Activated CD4-positive, alpha-beta memory T cell treated with anti-CD3 and anti-CD28 coated beads, Interleukin-2, amount 10 ng/mL, durations not matched to agents 7 days and 5 days (primary cell): ENCODE measurements at regions of chr2 and their contacts with region 1.

Region 1: DNA sequence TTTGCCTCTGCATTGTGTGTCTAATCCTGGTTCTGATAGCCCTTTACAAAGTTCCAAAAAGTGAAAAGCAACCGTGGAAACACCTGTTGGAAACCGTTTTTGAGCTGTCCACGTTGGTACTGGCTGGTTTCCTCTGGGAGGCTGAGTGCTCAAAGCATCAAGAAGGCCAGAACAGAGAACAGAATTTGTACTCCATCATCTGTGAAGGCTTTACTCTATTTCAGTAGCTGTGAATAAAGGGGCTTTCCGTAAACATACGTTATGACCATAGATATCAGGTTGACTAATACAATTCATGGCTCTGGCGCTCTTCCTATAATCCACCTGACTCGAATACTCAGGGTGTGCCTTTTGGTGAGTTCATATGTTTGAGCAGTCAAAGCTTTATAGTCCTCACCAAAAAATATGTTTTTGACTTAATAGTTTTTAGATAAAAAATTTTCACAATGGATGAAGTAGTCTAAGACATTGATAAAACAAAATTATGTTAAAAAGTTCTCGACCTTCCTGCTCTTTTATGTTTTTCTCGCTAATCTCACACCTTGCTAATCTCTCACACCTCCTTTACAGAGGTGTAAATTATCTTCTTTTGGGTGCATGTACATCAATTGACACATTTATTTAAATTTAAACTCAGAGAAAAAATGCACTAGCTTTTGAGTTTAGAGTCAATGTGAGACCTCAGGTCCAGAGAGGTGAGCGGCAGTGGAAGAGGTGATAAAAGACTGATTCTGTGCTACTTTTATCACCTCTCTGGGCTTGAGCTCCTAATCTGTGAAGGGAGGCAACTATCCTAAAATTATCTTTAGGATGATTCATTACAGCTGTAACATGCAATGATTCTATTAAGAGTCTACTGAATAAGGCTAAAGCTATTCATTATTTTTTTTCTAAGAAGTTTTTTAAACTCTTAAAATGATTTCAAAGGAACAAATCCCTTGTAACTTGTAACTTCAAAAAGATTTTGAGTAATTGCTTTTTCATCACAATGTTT is 65.3 kb downstream of the CXCR4 start:
- DNase-seq: peak; percentile 31
- H3K4me3 Mint-ChIP-seq: peak overlapping the region; percentile 53
- H3K27ac Mint-ChIP-seq: peak overlapping the region; percentile 87
- H3K4me1 Mint-ChIP-seq: peaks cover 92% of the 10 kb centered on the region
- H3K27me3 Mint-ChIP-seq: no peaks in the 10 kb centered on the region

Region 2: DNA sequence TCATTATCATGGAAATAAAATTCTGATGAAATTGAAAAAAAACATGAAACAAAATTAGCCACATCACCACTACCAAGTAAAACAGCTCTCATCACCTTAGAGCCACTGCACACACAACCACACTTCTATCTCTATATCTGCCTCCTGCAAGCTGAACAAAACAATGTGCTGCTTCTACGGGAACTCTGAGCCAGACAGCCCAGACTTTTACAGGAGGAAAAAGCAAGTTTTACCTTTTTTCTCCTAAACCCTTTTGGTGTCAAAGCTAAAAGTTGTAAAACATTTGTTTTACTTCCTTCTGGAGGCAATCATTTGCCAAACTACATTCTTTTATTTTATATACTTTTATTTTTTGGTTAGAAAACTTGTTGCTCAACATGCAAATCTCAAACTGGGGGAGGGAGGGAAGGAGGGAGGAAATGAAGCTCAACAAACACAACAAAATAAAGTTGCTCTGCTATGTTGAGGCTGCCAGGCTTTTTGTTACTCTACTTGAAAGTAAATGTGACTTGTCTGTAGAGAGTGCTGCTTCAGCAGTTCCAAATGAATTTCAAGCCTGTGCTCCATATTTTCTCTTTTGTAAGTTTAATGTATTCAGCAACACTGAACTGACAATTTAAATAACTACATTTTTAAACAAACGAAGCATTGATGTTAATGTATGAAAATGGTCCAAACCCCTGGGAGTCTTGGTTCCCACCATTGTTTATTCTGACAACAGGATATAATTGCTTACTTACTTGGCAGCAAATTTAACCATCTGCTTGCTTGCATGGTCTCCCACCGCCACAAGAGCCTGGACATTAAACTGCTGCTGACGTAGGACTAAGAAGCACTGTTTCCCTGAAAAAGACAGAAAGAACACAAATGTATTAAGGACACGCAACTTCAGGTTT is 91.8 kb before region 1 on chr2:
- CTCF ChIA-PET with region 1: no interaction called
- POLR2A ChIA-PET with region 1: interaction called, 31 read pairs
- DNase-seq: peak; percentile 33
- H3K4me3 Mint-ChIP-seq: peak overlapping the region; percentile 53
- H3K27ac Mint-ChIP-seq: peak overlapping the region; percentile 92
- H3K4me1 Mint-ChIP-seq: peaks cover 58% of the 10 kb centered on the region
- H3K27me3 Mint-ChIP-seq: no peaks in the 10 kb centered on the region

Region 3: DNA sequence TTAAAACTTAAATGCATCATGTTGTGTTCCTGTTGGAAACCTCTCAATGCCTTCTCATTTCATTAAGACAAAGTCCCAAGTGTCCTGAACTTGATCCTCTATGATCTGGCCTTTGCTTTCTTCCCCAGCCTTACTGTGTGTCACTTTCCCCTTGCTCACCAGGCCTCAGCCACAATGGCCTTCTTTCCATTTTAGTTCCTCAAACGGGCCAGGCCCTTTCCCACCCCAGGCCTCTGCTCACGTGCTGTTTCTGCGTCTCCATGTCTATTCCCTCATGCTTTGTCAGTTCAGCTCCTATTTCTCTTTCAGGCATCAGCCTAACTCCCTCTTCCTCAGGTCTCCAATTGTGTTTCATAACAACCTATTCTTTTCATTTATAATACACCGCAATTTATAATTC is 45.8 kb after region 1 on chr2:
- CTCF ChIA-PET with region 1: no interaction called
- POLR2A ChIA-PET with region 1: no interaction called
- DNase-seq: no peak
- H3K4me3 Mint-ChIP-seq: no peak overlapping the region
- H3K27ac Mint-ChIP-seq: no peak overlapping the region
- H3K4me1 Mint-ChIP-seq: peaks cover 14% of the 10 kb centered on the region
- H3K27me3 Mint-ChIP-seq: no peaks in the 10 kb centered on the region

Region 4: GRCh38 chr2:136112317-136113208 is 59.9 kb after region 1 on chr2:
- CTCF ChIA-PET with region 1: interaction called, 5 read pairs
- POLR2A ChIA-PET with region 1: interaction called, 71 read pairs
- DNase-seq: no peak
- H3K4me3 Mint-ChIP-seq: no peak overlapping the region
- H3K27ac Mint-ChIP-seq: no peak overlapping the region
- H3K4me1 Mint-ChIP-seq: peaks cover 36% of the 10 kb centered on the region
- H3K27me3 Mint-ChIP-seq: no peaks in the 10 kb centered on the region

Region 5: GRCh38 chr2:136238286-136239078 is 185.8 kb after region 1 on chr2:
- CTCF ChIA-PET with region 1: no interaction called
- POLR2A ChIA-PET with region 1: interaction called, 11 read pairs
- DNase-seq: peak; percentile 53
- H3K4me3 Mint-ChIP-seq: no peak overlapping the region
- H3K27ac Mint-ChIP-seq: peak overlapping the region; percentile 75
- H3K4me1 Mint-ChIP-seq: peaks cover 58% of the 10 kb centered on the region
- H3K27me3 Mint-ChIP-seq: no peaks in the 10 kb centered on the region

Region 6: DNA sequence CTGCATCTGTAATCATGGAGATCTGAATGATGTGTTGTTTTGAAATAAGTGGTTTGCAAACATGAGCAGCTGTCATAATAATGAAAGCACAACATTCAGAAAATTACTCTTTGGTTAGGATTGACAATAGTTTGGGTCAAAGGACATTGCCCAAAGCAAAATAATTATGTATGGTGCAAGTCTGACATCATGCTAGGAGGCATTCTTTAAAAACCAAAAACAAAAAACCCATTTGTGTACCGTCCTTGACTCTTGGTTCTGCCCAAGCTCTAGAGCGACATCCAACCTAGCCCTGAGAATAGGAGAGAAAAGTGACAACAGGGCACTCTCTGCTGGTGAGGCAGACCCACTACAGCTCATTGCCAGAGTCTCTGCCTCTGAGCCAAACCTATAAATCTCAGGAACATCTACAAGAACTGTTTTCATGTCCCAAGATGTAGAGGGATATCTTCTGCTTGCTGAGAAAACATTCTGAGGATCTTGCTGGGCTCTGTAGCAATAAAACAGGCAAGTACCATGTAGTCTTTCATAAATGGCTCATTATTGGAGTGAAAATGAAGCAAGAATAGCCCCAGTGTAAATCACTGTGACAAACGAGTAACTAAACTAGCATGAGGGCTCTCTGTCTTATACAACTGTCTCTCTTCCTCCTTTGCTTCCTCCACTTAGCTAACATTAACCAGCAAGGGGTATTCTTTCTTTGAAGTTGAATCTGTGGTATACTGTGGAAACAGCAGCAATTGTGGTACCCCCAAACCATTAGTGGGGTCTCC is 332.1 kb after region 1 on chr2:
- CTCF ChIA-PET with region 1: interaction called, 10 read pairs
- POLR2A ChIA-PET with region 1: interaction called, 16 read pairs
- DNase-seq: peak; percentile 64
- H3K4me3 Mint-ChIP-seq: peak overlapping the region; percentile 11
- H3K27ac Mint-ChIP-seq: peak overlapping the region; percentile 91
- H3K4me1 Mint-ChIP-seq: peaks cover 45% of the 10 kb centered on the region
- H3K27me3 Mint-ChIP-seq: no peaks in the 10 kb centered on the region